ENCODE measurements at regions of chr1 and their contacts with region 1.

Region 1: DNA sequence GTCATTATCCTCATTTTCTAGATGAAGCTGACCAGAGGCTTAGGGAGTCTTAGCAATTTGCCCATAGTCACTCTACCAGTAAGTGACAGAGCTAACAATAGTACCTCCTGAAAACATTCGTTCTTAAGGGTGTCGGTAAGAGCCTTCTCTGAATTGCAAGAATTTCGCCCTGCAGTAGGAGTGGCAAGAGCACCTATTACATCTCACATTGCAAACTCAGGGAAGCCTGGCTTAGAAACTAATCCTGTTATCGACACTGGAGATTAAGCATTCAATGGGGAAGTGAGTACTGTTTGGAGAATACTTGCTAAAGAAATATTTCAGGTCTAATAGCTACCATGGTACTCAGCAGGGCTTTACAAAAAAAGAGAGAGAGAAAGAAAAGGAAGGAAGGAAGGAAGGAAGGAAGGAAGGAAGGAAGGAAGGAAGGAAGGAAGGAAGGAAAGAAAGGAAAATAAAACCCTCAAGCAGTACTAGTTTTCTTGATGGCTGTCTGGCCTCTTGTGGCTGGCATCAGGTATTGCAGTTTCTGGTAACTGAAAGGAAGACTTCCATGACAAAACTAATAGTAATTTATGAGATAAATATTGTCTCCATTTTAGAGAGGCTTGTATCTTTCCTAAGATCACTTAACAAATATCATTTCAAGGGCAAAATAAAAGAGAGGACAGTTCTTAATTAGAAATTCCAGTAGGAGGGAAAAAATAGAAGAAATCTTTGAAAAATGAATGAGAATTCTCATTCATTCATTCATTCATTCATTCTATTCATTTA is 10.4 kb downstream of the C1orf226 start:
- DNase-seq: peak; percentile 50 to 80 (median 76)
- H3K4me3 ChIP-seq: no peak overlapping the region
- H3K27ac ChIP-seq: no peak overlapping the region
- H3K4me1 ChIP-seq: peaks cover 0 to 17% (median 3%) of the 10 kb centered on the region in 4 experiments
- H3K27me3 ChIP-seq: peaks cover 0 to 14% (median 4%) of the 10 kb centered on the region in 5 experiments

Region 2: DNA sequence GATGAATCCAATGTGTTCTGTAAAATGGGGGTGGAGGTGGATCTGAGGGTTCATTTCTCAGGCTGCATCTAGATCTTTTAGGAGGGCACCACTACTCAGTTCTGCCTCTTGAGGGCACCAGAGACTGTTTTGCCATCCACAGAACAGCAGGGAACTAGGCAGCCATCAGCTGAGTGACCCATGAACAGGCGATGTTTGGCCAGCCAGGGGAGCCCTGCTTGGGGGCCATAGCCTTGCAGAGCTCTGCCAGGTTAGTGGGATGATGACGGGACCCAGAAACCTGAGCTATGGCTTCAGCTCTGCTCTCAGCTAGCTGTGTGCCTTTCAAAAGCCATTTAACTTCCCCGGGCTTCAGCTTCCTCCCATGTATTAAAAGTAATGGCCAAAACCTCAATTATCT is 335.9 kb before region 1 on chr1:
- CTCF ChIA-PET with region 1: interaction called, 12 read pairs
- POLR2A ChIA-PET with region 1: no interaction called
- DNase-seq: peak; percentile 51 to 72 (median 69)
- H3K4me3 ChIP-seq: peak overlapping the region in 1 of 7 experiments; percentile 29
- H3K27ac ChIP-seq: no peak overlapping the region
- H3K4me1 ChIP-seq: peaks cover 0 to 6% (median under 1%) of the 10 kb centered on the region in 4 experiments
- H3K27me3 ChIP-seq: no peaks in the 10 kb centered on the region

Region 3: DNA sequence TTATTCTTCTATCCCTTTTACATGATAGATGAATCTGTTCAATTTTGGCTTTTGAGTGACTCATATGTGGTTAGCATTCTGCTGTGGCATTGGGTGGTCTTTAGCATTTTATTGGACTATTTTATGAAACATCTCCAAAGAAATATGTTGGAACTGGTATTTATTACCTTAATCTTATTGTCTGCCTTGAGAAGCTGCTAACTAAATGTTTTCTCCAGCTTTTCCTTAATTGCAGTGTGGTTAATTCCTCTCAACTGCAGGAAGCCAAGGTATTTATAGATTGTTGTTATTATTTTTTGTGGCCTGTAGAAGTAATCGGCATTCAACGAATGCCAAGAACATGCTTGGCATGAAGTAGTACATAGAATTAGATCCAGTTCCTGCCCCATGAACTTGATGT is 258.4 kb before region 1 on chr1:
- CTCF ChIA-PET with region 1: no interaction called
- POLR2A ChIA-PET with region 1: no interaction called
- DNase-seq: no peak
- H3K4me3 ChIP-seq: no peak overlapping the region
- H3K27ac ChIP-seq: no peak overlapping the region
- H3K4me1 ChIP-seq: peaks cover 2 to 10% (median 8%) of the 10 kb centered on the region in 4 experiments
- H3K27me3 ChIP-seq: no peaks in the 10 kb centered on the region

Region 4: GRCh38 chr1:162357681-162358266 is 34.2 kb before region 1 on chr1:
- CTCF ChIA-PET with region 1: interaction called, 15 read pairs
- POLR2A ChIA-PET with region 1: interaction called, 4 read pairs
- DNase-seq: peak; percentile 53 to 71 (median 66)
- H3K4me3 ChIP-seq: no peak overlapping the region
- H3K27ac ChIP-seq: no peak overlapping the region
- H3K4me1 ChIP-seq: peaks cover 0 to 17% (median 2%) of the 10 kb centered on the region in 4 experiments
- H3K27me3 ChIP-seq: no peaks in the 10 kb centered on the region

Region 5: GRCh38 chr1:162373541-162374375 is 18.2 kb before region 1 on chr1:
- CTCF ChIA-PET with region 1: interaction called, 12 read pairs
- POLR2A ChIA-PET with region 1: no interaction called
- DNase-seq: no peak
- H3K4me3 ChIP-seq: no peak overlapping the region
- H3K27ac ChIP-seq: no peak overlapping the region
- H3K4me1 ChIP-seq: peaks cover 0 to 17% (median 10%) of the 10 kb centered on the region in 4 experiments
- H3K27me3 ChIP-seq: no peaks in the 10 kb centered on the region

Region 6: DNA sequence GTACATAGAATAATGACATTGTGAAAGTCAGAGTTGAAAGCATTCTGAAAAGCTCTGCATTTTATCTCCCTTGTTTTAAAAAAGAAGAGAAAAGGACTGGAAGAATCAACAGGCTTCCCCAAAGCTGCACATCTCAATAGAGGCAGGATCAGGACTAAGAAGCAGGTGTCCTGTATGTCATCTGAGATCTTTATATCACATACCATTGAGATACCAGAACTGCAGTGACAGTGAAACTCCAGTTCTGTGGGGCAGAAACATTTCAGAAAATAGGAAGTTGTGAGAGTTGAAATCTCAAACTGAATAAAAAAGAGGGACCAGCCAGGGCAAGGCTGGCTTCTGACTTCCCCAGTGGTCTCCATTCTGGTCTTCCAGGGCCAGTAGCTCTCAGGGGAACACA is 52.9 kb after region 1 on chr1:
- CTCF ChIA-PET with region 1: no interaction called
- POLR2A ChIA-PET with region 1: no interaction called
- DNase-seq: no peak
- H3K4me3 ChIP-seq: no peak overlapping the region
- H3K27ac ChIP-seq: no peak overlapping the region
- H3K4me1 ChIP-seq: peaks cover 0 to 4% (median 0%) of the 10 kb centered on the region in 4 experiments
- H3K27me3 ChIP-seq: peaks cover 0 to 2% (median 0%) of the 10 kb centered on the region in 5 experiments